Vagina (tissue), 2 donors: ENCODE measurements at regions of chr1 and their contacts with region 1.

Region 1: GRCh38 chr1:53945433-53946251 is at the start of gene IFT25:
- DNase-seq: peak in 1 of 2 donors; percentile 97
- H3K4me3 ChIP-seq: peak within 1 kb of the TSS; percentile 70 to 86
- H3K27ac ChIP-seq: peak within 1 kb of the TSS; percentile 87
- H3K4me1 ChIP-seq: peaks cover 47% of the 10 kb centered on the region
- H3K27me3 ChIP-seq: no peaks in the 10 kb centered on the region
- CTCF ChIP-seq: no peak
- POLR2A ChIP-seq: peak in 1 of 2 donors; percentile 57
- total RNA-seq, gene IFT25: 19.4 TPM

Region 2: GRCh38 chr1:53889304-53890298 is 56.0 kb before region 1 on chr1 and contains the start of gene YIPF1:
- intact Hi-C with region 1: loop called (anchors 5 kb)
- DNase-seq: peak in 1 of 2 donors; percentile 92
- H3K4me3 ChIP-seq: peak within 1 kb of the TSS; percentile 91 to 94
- H3K27ac ChIP-seq: peak within 1 kb of the TSS; percentile 58
- H3K4me1 ChIP-seq: peaks cover 19% of the 10 kb centered on the region
- H3K27me3 ChIP-seq: no peaks in the 10 kb centered on the region
- CTCF ChIP-seq: no peak
- POLR2A ChIP-seq: no peak
- total RNA-seq, gene YIPF1: 22.1 TPM

Region 3: DNA sequence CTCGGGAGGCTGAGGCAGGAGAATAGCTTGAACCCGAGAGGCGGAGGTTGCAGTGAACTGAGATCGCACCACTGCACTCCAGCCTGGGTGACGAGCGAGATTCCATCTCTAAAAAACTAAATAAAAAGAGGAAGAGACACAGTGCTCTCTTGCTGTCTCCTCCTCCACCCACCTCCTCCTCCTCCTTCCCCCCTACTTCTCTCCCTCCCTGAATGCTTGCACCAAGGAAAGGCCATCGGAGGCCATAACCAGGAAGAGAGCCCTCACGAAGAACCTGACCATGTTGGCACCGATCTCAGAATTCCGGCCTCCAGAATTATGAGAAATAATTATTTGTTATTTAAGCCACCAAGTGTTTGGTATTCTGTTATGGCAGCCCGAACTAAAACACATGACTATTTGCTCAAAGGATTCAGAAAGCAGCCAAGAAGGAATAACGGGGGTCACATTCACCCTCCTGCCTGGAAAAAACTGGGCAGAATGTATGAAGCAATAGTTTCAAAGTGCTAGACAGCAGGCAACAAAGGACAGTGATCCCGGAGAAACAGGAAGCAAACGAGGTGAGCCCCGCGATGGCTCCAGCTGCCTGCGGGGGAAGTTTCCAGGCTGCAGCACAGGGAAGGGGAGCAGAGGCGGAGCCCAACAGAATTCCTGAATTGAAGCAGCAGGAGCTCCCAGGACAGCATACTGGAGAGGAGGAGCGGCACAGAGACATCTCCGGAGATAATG is 36.6 kb after region 1 on chr1:
- intact Hi-C with region 1: no loop called
- DNase-seq: no peak
- H3K4me3 ChIP-seq: peak overlapping the region; percentile 30 to 39
- H3K27ac ChIP-seq: peak overlapping the region; percentile 71
- H3K4me1 ChIP-seq: peaks cover 16% of the 10 kb centered on the region
- H3K27me3 ChIP-seq: no peaks in the 10 kb centered on the region
- CTCF ChIP-seq: no peak
- POLR2A ChIP-seq: no peak

Region 4: DNA sequence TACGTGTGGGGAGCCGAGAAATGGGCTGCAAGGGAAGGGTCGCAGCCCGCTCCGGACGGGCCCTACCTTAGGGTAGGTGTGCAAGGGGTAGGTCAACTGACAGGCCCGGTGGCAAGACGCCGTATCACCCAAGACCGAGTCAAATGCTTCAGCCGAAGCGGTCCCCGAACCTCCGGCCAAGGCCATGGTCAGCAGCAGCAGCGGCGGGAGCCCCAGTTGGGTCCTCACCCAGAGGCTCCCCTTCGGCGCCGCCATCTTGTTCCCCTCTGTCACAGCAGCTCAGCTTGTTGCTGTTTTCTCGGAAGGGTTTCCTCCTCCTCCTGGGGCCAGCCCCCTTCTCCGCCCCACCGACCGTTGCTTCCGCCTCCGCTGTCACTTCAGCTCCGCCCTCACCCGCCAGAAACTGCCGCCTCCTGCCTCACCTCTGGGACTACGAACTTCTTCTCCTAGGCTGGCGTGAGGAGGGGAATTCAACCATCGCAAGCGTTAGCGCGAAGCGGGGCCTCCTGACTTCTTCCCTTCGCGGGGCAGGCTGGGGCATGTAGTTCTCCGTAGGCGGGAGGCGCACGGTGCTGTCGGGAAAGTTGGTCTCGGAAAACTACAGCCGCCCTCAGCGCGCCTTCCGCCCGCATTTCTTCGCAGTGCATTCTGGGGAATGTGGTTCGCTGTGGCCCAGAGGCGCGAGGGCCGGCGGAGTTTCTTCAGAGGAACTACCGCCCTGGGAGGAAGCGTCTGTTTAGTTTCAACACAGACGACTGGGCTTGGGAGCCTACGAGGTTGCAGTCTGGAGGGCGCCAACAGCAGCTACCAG is 107.5 kb after region 1 on chr1 and contains the starts of genes TCEANC2 and TMEM59:
- intact Hi-C with region 1: loop called (anchors 5 kb)
- DNase-seq: peak; percentile 99
- H3K4me3 ChIP-seq: peak within 1 kb of the TSS; percentile 92 to 100
- H3K27ac ChIP-seq: peak within 1 kb of the TSS; percentile 91
- H3K4me1 ChIP-seq: peaks cover 50% of the 10 kb centered on the region
- H3K27me3 ChIP-seq: no peaks in the 10 kb centered on the region
- CTCF ChIP-seq: peak in 1 of 3 experiments; percentile 15
- POLR2A ChIP-seq: peak; percentile 49 to 68
- total RNA-seq, gene TCEANC2: 4.7 TPM
- total RNA-seq, gene TMEM59: 113 TPM

Region 5: GRCh38 chr1:54297596-54298283 is 352.1 kb after region 1 on chr1:
- intact Hi-C with region 1: no loop called
- DNase-seq: no peak
- H3K4me3 ChIP-seq: no peak overlapping the region
- H3K27ac ChIP-seq: peak overlapping the region; percentile 84
- H3K4me1 ChIP-seq: peaks cover 92% of the 10 kb centered on the region
- H3K27me3 ChIP-seq: no peaks in the 10 kb centered on the region
- CTCF ChIP-seq: no peak
- POLR2A ChIP-seq: no peak